B cell (primary cell): ENCODE measurements at regions of chr3 and their contacts with region 1.

Region 1: GRCh38 chr3:11060500-11061251 is 68.1 kb downstream of the SLC6A1 start:
- DNase-seq: peak; percentile 67
- ATAC-seq: peak; percentile 56
- H3K4me3 ChIP-seq: no peak overlapping the region
- H3K4me3 Mint-ChIP-seq: no peak overlapping the region
- H3K27ac ChIP-seq: no peak overlapping the region
- H3K27ac Mint-ChIP-seq: no peak overlapping the region
- H3K4me1 ChIP-seq: peaks cover 0 to 6% of the 10 kb centered on the region in 2 donors
- H3K4me1 Mint-ChIP-seq: peaks cover 4% of the 10 kb centered on the region
- H3K27me3 ChIP-seq: peaks cover 0 to 18% (median 8%) of the 10 kb centered on the region in 4 experiments
- H3K27me3 Mint-ChIP-seq: peaks cover 39% of the 10 kb centered on the region
- CTCF ChIP-seq: peak; percentile 83

Region 2: GRCh38 chr3:10619989-10620832 is 440.5 kb before region 1 on chr3:
- CTCF ChIA-PET with region 1: no interaction called
- POLR2A ChIA-PET with region 1: no interaction called
- intact Hi-C with region 1: no loop called
- DNase-seq: no peak
- ATAC-seq: no peak
- H3K4me3 ChIP-seq: no peak overlapping the region
- H3K4me3 Mint-ChIP-seq: no peak overlapping the region
- H3K27ac ChIP-seq: no peak overlapping the region
- H3K27ac Mint-ChIP-seq: no peak overlapping the region
- H3K4me1 ChIP-seq: no peaks in the 10 kb centered on the region
- H3K4me1 Mint-ChIP-seq: no peaks in the 10 kb centered on the region
- H3K27me3 ChIP-seq: peaks cover 0 to 20% (median 2%) of the 10 kb centered on the region in 4 experiments
- H3K27me3 Mint-ChIP-seq: peaks cover 28% of the 10 kb centered on the region
- CTCF ChIP-seq: no peak

Region 3: GRCh38 chr3:11168881-11169805 is 108.5 kb after region 1 on chr3:
- CTCF ChIA-PET with region 1: no interaction called
- POLR2A ChIA-PET with region 1: no interaction called
- intact Hi-C with region 1: loop called (anchors 1 kb)
- DNase-seq: no peak
- ATAC-seq: no peak
- H3K4me3 ChIP-seq: no peak overlapping the region
- H3K4me3 Mint-ChIP-seq: no peak overlapping the region
- H3K27ac ChIP-seq: no peak overlapping the region
- H3K27ac Mint-ChIP-seq: no peak overlapping the region
- H3K4me1 ChIP-seq: no peaks in the 10 kb centered on the region
- H3K4me1 Mint-ChIP-seq: no peaks in the 10 kb centered on the region
- H3K27me3 ChIP-seq: no peaks in the 10 kb centered on the region
- H3K27me3 Mint-ChIP-seq: peaks cover 3% of the 10 kb centered on the region
- CTCF ChIP-seq: no peak

Region 4: GRCh38 chr3:11204697-11205348 is 144.1 kb after region 1 on chr3:
- CTCF ChIA-PET with region 1: interaction called, 23 read pairs
- POLR2A ChIA-PET with region 1: no interaction called
- intact Hi-C with region 1: no loop called
- DNase-seq: no peak
- ATAC-seq: no peak
- H3K4me3 ChIP-seq: no peak overlapping the region
- H3K4me3 Mint-ChIP-seq: no peak overlapping the region
- H3K27ac ChIP-seq: no peak overlapping the region
- H3K27ac Mint-ChIP-seq: no peak overlapping the region
- H3K4me1 ChIP-seq: no peaks in the 10 kb centered on the region
- H3K4me1 Mint-ChIP-seq: no peaks in the 10 kb centered on the region
- H3K27me3 ChIP-seq: peaks cover 0 to 4% (median 0%) of the 10 kb centered on the region in 4 experiments
- H3K27me3 Mint-ChIP-seq: peaks cover 25% of the 10 kb centered on the region
- CTCF ChIP-seq: no peak